Mammary epithelial cell (primary cell): ENCODE measurements at regions of chr12 and their contacts with region 1.

Region 1: DNA sequence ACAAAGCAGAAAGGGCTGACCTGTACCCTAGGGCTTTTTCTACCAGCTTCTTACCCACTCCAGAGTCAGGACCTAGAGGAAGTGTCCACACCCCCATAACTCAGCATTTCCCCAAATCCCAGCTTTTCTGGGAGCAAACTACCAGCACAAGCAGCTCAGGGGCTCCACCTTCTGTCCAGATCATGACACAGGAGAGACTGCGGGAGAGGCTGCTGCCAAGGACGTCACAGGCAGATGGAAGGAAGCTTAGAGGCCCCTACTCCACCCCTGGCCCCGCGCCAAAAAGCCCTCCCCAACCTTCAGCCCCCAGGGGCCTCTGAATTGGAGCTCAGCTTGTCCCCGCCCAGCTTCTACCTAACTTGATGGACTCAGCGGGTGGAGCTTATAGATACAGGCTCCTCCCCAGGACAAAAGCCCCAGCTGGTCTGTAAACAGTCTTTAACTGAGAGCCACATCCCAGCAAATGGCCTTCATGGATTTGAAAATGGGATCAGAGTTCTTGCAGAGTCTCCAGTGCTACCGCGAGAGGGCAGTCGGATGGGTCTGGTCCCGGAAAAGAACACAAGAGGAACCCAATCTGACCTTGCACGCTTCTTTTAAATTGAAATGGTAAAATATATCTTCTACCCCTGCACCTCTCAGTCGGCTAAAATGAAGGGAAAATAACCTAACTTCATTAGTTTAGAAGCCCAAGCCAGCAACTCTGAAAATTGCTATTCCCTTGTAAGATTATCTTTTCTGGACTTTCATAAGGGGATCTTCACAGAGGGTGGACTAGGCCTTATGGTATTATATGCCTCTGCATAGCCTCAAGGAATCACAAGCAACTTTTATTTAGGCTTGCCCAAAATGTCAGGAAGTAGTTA is 6.8 kb upstream of the BAZ2A start:
- DNase-seq: peak; percentile 98
- H3K4me3 ChIP-seq: peak overlapping the region; percentile 68 to 85 (median 82)
- H3K27ac ChIP-seq: peak overlapping the region; percentile 85
- H3K4me1 ChIP-seq: peaks cover 22% of the 10 kb centered on the region
- H3K27me3 ChIP-seq: no peaks in the 10 kb centered on the region
- CTCF ChIP-seq: peak; percentile 67 to 78

Region 2: GRCh38 chr12:56425193-56425592 is 211.7 kb before region 1 on chr12:
- CTCF ChIA-PET with region 1: no interaction called
- dilution Hi-C with region 1: loop called (anchors 5 kb)
- in situ Hi-C with region 1: no loop called
- intact Hi-C with region 1: no loop called
- DNase-seq: no peak
- H3K4me3 ChIP-seq: no peak overlapping the region
- H3K27ac ChIP-seq: no peak overlapping the region
- H3K4me1 ChIP-seq: no peaks in the 10 kb centered on the region
- H3K27me3 ChIP-seq: no peaks in the 10 kb centered on the region
- CTCF ChIP-seq: no peak

Region 3: DNA sequence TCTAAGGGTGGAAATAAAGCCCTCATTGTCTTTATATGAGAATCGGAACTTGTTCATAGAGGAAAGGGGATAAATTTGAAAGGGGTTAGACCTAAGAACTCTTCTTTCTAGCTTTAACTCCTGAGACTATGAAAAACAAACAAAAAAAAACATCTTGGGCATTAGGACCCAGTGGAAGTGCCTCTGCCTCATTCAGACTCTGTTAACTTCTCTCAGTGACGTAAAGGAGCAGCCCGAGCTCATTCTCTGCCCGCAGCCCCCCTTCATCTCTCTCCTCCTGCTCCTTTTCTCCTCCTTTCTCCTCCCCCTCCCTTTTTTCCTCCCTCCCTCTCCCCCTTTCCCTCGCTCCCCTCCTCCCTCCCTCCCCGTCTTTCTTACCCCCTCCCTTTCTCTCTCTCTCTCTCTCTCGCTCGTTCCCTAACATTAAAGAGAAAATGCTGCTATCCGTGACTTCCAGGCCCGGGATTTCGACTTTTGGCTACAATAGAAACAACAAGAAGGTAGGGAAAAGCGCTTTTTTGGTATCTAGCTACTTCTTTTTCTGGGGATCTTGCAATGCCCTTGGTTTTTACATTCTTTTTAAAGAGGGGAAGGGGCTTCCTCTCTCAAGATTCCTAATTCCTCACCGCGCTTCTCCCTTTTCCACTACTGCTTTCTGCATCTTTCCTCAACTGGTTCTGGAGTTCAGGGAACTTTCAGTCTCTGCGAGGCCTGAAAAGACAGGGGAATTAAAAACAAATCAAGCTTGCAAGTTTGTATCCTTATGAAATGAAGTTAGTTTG is 115.1 kb before region 1 on chr12 and contains the start of gene RBMS2:
- CTCF ChIA-PET with region 1: interaction called, 6 read pairs
- dilution Hi-C with region 1: no loop called
- in situ Hi-C with region 1: loop called in 1 of 2 experiments (anchors 10 kb)
- intact Hi-C with region 1: no loop called
- DNase-seq: peak; percentile 86
- H3K4me3 ChIP-seq: peak within 1 kb of the TSS; percentile 52 to 96 (median 89)
- H3K27ac ChIP-seq: peak within 1 kb of the TSS; percentile 83
- H3K4me1 ChIP-seq: peaks cover 43% of the 10 kb centered on the region
- H3K27me3 ChIP-seq: no peaks in the 10 kb centered on the region
- CTCF ChIP-seq: no peak
- total RNA-seq, gene RBMS2: 18.7 to 70.4 TPM

Region 4: GRCh38 chr12:56593909-56594621 is 42.8 kb before region 1 on chr12:
- CTCF ChIA-PET with region 1: interaction called, 3 read pairs
- dilution Hi-C with region 1: no loop called
- in situ Hi-C with region 1: no loop called
- intact Hi-C with region 1: loop called (anchors 2 kb)
- DNase-seq: peak; percentile 59
- H3K4me3 ChIP-seq: no peak overlapping the region
- H3K27ac ChIP-seq: peak overlapping the region; percentile 9
- H3K4me1 ChIP-seq: peaks cover 12% of the 10 kb centered on the region
- H3K27me3 ChIP-seq: no peaks in the 10 kb centered on the region
- CTCF ChIP-seq: peak; percentile 82 to 88

Region 5: DNA sequence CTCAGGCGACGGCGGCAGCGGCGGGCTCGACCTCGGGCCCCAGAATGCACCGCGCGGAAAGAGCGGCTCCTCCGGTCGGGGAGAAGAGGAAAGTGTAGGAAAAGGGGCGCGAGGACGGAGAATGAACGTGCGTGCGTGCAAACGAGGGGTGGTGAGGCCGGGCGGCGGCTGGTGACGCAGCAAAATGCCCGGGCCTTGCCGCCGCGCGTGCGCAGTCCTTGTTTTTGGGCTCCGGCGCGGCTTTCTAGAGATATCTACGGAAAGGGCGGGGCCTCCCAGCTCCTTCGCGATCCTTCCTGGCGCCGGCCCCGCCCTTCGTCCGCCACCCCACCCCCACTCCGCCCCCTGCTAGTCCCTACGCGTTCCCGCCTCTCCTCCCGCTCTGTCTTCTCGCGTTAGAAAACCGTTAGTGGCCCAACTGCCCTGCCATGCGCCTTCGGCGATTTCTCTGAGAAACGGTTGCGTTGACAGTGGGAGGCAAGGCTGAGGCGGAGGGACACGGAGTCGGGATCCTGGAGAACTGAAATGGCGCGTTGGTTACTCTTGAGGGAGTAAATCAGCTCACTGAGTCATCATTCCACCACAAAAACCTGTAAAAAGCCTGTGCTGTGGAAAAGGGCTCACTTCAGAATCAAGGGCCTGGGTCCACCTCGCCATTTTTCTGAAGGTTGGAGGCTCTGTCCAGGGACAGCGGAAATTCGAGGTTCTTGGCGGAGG is 51.4 kb after region 1 on chr12 and contains the start of gene PTGES3:
- CTCF ChIA-PET with region 1: interaction called, 9 read pairs
- dilution Hi-C with region 1: no loop called
- in situ Hi-C with region 1: no loop called
- intact Hi-C with region 1: loop called (anchors 1 kb)
- DNase-seq: peak; percentile 98
- H3K4me3 ChIP-seq: peak within 1 kb of the TSS; percentile 64 to 94 (median 78)
- H3K27ac ChIP-seq: peak within 1 kb of the TSS; percentile 89
- H3K4me1 ChIP-seq: peaks cover 4% of the 10 kb centered on the region
- H3K27me3 ChIP-seq: no peaks in the 10 kb centered on the region
- CTCF ChIP-seq: peak in 1 of 2 donors; percentile 4
- total RNA-seq, gene PTGES3: 63.5 to 197 TPM

Region 6: DNA sequence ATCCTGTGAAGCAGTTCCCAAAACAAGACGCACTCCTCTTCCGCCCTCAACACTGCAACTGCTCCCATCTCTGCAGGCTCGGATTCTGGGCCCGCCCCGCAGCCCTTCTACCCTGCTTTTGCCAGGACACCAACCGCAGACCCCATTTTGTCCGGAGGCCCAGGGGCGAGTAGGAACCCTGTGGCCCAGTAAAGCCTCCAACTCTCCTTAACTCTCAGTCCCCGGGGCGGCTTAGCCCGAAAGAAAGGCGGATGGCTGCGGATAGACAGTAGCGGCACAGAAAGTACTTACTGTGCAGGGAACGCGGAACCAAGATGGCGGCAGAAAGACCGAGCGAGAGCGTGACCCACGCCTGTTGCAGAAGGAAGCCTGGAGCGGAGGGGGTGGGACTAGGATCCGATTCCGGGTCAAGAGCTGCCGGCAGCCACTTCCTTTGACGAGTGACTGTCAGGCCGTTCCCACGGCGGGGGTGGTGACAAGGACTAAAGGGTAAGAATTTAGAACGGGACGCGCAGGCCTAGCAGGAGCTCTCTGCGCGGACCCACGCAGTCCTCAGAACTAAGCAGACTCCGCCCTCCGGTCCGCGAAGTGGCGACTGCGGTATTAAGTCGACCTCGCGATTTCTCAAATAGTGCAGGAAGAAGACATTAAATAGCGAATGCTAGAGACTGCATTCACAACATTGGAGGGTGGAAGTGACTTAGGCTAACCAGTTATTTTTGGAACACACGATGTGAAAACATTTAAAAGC is 88.2 kb after region 1 on chr12 and contains the start of gene NACA:
- CTCF ChIA-PET with region 1: interaction called, 3 read pairs
- dilution Hi-C with region 1: no loop called
- in situ Hi-C with region 1: no loop called
- intact Hi-C with region 1: loop called (anchors 2 kb)
- DNase-seq: peak; percentile 96
- H3K4me3 ChIP-seq: peak within 1 kb of the TSS; percentile 74 to 99 (median 96)
- H3K27ac ChIP-seq: peak within 1 kb of the TSS; percentile 94
- H3K4me1 ChIP-seq: peaks cover 28% of the 10 kb centered on the region
- H3K27me3 ChIP-seq: no peaks in the 10 kb centered on the region
- CTCF ChIP-seq: no peak
- total RNA-seq, gene NACA: 727 to 735 TPM

Region 7: DNA sequence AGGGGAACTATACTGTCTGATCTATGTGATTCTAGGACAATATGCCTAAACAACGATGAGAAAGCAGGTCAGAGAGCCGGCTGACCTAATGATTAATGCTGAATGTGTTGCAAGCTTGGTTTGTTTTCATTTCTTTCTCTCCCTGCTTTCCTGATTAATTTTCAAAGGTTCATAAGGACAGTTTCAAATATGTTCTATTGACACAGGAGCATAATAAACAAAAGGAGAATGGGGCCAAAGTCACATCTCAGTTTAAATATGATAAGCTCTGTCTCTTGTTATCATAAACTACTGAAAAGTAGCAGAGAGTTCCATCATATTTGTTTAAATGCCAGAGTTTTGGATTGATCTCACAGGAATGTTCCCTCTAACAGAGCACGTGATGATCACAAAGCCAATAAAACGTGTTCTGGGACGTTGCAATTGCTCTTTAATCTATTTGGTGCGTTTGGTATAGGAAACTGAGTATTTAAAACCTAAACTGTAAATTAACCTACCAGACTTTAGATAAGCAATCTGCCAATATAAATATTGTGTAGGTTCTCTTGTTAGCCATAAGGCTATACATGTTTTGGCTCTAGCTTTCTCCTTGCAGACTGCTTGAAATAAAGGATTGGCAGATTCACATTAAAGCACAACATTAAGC is 122.5 kb after region 1 on chr12:
- CTCF ChIA-PET with region 1: no interaction called
- dilution Hi-C with region 1: no loop called
- in situ Hi-C with region 1: no loop called
- intact Hi-C with region 1: no loop called
- DNase-seq: no peak
- H3K4me3 ChIP-seq: no peak overlapping the region
- H3K27ac ChIP-seq: no peak overlapping the region
- H3K4me1 ChIP-seq: no peaks in the 10 kb centered on the region
- H3K27me3 ChIP-seq: no peaks in the 10 kb centered on the region
- CTCF ChIP-seq: no peak